ENCODE measurements at regions of chr1 and their contacts with region 1.

Region 1: DNA sequence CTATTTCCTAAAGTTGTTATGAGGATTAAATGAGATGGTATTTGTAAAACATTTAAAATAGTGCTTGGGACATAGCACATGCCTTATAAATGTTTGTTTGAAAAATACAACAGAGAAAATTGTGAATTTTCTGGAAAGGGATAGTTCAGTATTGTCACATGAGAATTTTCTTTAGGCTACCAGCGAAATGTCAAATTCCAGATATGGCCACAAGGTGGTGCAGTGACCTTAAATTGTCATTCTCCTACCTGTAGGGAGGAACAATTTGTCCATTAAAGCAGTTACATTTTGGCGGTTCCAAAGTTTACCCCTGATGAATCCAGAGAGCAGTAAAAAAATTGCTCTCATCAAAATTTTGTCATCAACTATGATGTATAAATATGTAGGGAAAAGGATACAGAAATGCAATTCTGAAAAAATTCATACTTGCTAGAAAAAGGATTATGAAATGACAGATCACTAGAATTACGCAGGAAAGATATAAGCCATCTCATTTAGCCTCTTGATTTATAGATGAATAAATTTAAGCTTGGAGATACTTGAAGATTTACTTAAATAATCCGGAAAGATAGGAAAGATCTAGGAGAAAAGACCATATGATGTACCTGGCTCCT is 50.2 kb upstream of the TSHB start:
- DNase-seq: peak; percentile 63
- H3K4me3 Mint-ChIP-seq: no peak overlapping the region
- H3K27ac Mint-ChIP-seq: no peak overlapping the region
- H3K4me1 Mint-ChIP-seq: no peaks in the 10 kb centered on the region
- H3K27me3 Mint-ChIP-seq: no peaks in the 10 kb centered on the region
- CTCF ChIP-seq: peak; percentile 67

Region 2: GRCh38 chr1:115041654-115042053 is 62.3 kb after region 1 on chr1:
- CTCF ChIA-PET with region 1: interaction called, 3 read pairs
- intact Hi-C with region 1: loop called (anchors 1 kb)
- DNase-seq: no peak
- H3K4me3 Mint-ChIP-seq: no peak overlapping the region
- H3K27ac Mint-ChIP-seq: no peak overlapping the region
- H3K4me1 Mint-ChIP-seq: no peaks in the 10 kb centered on the region
- H3K27me3 Mint-ChIP-seq: no peaks in the 10 kb centered on the region
- CTCF ChIP-seq: no peak

Region 3: DNA sequence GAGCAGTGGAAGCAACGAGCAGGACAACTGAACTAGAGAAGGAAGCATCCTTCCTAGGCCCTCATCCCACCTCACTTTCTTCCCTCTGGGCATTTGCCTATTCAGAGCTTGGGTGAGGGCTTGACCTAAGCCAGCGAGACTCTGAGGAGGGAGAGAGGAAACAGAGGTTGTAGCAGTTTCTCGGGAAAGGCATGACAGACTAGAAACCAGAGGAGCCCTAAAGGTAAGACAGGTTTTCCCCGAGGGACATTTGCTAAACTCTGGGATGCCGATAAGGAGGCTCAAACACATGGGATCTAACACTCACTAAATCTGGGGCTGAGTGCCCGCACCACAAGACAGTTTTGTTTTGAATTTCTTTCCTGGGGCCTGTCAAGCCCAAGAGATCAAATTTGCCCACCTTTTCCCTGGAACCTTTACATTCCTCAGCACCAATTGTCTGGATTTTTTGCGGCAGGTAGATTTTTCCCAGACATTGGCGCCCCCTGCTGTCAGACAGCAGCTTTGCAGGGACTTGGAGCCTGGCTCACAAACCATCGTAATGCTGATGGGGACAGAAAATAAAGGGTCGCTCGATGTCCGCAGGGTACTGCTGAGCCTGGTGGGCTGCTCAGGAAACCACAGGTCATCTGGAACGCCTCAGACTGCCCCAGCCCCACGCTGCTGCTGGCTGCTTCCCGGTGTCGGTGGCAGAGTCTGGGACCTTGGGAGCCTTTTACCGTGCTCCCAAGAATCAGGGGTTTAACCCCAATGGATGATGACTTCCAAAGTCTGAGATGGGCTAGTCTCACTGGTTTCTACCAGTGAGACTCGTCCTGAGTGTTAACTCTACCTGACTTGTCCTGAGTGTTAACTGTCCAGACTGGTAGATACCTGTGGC is 133.4 kb after region 1 on chr1:
- CTCF ChIA-PET with region 1: no interaction called
- intact Hi-C with region 1: loop called (anchors 1 kb)
- DNase-seq: peak; percentile 53
- H3K4me3 Mint-ChIP-seq: no peak overlapping the region
- H3K27ac Mint-ChIP-seq: no peak overlapping the region
- H3K4me1 Mint-ChIP-seq: peaks cover 30% of the 10 kb centered on the region
- H3K27me3 Mint-ChIP-seq: no peaks in the 10 kb centered on the region
- CTCF ChIP-seq: peak; percentile 80

Measured in Calu3 (cell line).